ENCODE measurements at regions of chr4 and their contacts with region 1.

Region 1: DNA sequence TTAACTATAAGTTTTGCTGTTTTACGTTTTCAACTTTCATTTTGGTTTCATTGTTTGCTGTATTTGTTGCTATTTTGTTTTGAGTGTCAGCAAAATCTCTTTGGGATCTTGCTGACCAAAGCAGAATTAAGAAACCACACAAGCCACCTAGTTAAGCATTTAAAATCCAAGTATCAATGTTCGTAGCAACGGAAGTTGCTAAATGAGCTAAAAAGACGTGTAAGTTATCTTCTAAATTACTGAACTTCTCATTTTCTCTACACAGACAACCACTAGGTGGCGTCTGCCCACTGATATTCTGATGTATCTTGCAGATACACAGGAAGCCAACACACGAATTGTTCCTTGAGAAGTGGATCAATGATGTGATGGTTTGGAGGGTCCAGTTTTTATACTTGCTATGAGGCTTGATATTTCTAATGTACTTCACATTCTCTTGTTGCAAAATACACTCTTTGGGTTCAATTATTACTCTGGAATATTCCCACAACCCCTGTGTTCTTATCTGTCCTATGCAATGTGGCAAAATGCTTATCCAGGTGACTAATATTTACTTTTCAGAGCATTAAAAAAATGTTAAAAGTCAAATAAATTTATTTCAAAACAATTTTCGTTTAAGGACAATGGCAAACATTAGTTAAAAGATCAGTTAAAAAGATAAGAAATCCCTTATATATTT is 250.5 kb downstream of the TECRL start:
- ATAC-seq: peak in 3 of 8 experiments; percentile 58 to 74 (median 61)
- H3K4me3 ChIP-seq: no peak overlapping the region
- H3K27ac ChIP-seq: no peak overlapping the region
- H3K4me1 ChIP-seq: no peaks in the 10 kb centered on the region

Region 2: GRCh38 chr4:64016542-64017292 is 142.1 kb before region 1 on chr4:
- in situ Hi-C with region 1: no loop called
- ATAC-seq: no peak
- H3K4me3 ChIP-seq: no peak overlapping the region
- H3K27ac ChIP-seq: no peak overlapping the region
- H3K4me1 ChIP-seq: no peaks in the 10 kb centered on the region

Region 3: GRCh38 chr4:64539234-64539849 is 380.6 kb after region 1 on chr4:
- in situ Hi-C with region 1: loop called in 5 of 9 experiments (anchors 25 kb)
- ATAC-seq: peak; percentile 50 to 88 (median 80)
- H3K4me3 ChIP-seq: no peak overlapping the region
- H3K27ac ChIP-seq: no peak overlapping the region
- H3K4me1 ChIP-seq: no peaks in the 10 kb centered on the region